ENCODE measurements at regions of chr1 and their contacts with region 1.

Region 1: DNA sequence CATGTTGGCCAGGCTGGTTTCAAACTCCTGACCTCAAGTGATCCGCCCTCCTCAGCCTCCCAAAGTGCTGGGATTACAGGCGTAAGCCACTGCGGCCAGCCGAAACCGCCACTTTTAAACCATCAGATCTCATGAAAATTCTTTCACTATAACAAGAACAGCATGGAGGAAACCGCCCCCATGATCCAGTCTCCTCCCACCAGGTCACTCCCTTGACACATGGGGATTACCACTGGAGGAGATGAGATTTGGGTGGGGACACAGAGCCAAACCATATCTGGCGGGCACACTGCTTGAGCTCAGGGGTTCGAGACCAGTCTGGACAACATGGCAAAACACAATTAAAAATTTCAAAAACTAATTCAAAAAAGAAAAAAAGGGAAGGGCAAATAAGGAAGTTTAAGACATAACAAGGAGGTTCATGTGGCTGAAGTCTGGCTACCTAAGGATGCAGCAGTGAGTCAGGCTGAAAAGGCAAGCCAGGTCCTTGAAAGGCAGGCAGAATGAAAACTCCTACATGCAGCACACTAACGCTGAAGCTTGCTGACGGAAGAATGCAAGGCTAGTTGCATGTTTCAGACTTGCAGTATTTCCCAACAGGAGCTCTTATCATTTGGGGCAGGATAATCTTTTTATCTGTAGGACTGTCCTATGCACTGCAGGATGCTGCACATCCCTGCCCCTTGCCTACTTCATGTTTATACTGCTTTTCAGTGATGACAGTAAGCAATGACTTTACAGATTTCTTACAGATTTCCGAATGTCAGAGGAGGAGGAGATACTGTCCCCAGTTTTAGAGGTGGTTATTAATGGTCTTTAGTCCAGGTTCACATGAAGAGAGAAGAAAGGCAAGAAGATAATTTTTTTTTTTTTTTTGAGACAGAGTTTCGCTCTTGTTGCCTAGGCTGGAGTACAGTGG is 49.3 kb downstream of the FBXO42 start:
- DNase-seq: peak in 1 of 2 donors; percentile 35
- H3K4me3 ChIP-seq: no peak overlapping the region
- H3K27ac ChIP-seq: peak overlapping the region; percentile 8 to 47
- H3K4me1 ChIP-seq: peaks cover 4 to 31% of the 10 kb centered on the region in 2 donors
- H3K27me3 ChIP-seq: no peaks in the 10 kb centered on the region
- CTCF ChIP-seq: no peak

Region 2: DNA sequence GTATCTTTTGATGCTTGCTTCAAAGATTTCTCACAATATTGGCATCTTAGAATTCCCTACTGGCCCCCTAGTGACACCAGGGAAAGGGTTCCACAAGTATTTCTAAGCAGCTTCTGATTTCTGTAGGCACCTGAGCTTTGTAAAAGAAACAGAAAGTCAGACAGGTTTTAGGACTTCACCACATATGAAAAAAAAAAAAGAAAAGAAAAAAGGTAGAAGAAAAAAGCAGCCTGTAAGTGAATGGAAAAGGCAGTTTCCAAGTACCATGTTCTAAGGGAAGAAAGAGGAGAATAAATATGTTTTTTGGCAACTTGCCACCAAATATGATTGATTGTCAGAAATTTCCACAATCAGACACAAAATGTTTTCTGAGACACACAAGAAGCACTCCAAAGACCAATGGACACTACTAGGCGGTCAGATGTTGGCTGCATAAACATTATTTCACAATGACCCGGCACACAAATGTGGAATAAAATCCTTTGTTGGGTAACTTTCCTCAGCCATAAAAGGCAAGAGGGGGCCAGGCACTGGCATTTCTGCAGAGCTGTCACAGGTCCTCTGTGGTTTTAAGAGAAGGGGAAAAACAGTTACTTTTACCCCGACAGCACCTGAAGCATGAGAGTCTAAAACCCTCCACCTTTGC is 53.2 kb before region 1 on chr1:
- intact Hi-C with region 1: loop called (anchors 2 kb)
- DNase-seq: peak in 1 of 2 donors; percentile 90
- H3K4me3 ChIP-seq: peak overlapping the region in 1 of 2 donors; percentile 33
- H3K27ac ChIP-seq: peak overlapping the region; percentile 83 to 85
- H3K4me1 ChIP-seq: peaks cover 18 to 73% of the 10 kb centered on the region in 2 donors
- H3K27me3 ChIP-seq: no peaks in the 10 kb centered on the region
- CTCF ChIP-seq: no peak

Region 3: GRCh38 chr1:16318555-16318954 is 15.6 kb after region 1 on chr1:
- intact Hi-C with region 1: loop called (anchors 2 kb)
- DNase-seq: peak in 1 of 2 donors; percentile 76
- H3K4me3 ChIP-seq: no peak overlapping the region
- H3K27ac ChIP-seq: peak overlapping the region; percentile 2 to 67
- H3K4me1 ChIP-seq: peaks cover 4 to 69% of the 10 kb centered on the region in 2 donors
- H3K27me3 ChIP-seq: no peaks in the 10 kb centered on the region
- CTCF ChIP-seq: no peak

Region 4: GRCh38 chr1:16351994-16352841 is 49.2 kb after region 1 on chr1 and contains the start of gene FBXO42:
- intact Hi-C with region 1: loop called (anchors 2 kb)
- DNase-seq: peak; percentile 61 to 96
- H3K4me3 ChIP-seq: peak within 1 kb of the TSS; percentile 95
- H3K27ac ChIP-seq: peak within 1 kb of the TSS; percentile 96 to 98
- H3K4me1 ChIP-seq: peaks cover 8 to 32% of the 10 kb centered on the region in 2 donors
- H3K27me3 ChIP-seq: no peaks in the 10 kb centered on the region
- CTCF ChIP-seq: peak; percentile 28 to 54 (median 34)
- total RNA-seq, gene FBXO42: 36.6 TPM

Region 5: DNA sequence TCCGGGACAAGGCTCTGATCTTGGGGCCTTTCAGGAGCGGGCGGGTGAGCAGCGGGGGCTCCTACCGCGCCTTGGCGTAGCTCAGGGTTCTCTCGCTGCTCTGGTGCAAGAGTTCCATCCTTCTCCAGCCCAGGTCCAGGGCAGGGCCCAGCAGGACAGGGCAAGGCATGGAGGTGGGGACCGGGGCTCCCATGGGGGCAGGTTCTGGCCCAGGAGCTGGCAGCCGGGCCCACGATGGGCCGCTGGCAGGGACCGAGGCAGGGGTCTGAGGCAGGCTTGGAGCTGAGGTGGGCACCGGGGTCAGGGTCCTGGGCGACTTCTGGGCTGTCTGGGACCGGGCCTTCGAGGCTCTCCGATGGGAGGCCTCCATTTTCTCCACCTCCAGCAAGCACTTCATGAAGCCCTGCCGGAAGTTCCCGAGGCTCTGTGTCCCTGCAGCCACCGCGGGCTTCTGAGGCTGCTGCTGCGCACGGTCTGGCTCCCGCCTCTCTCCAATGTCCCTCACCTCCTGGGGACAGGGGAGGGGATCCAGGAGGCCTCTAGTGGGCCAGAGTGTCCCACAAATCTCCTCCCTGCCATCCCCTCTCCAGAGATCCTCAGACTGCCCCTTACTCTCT is 106.7 kb after region 1 on chr1:
- intact Hi-C with region 1: no loop called
- DNase-seq: no peak
- H3K4me3 ChIP-seq: no peak overlapping the region
- H3K27ac ChIP-seq: no peak overlapping the region
- H3K4me1 ChIP-seq: no peaks in the 10 kb centered on the region
- H3K27me3 ChIP-seq: no peaks in the 10 kb centered on the region
- CTCF ChIP-seq: no peak

Measured in ascending aorta (tissue), 2 donors.